Esophagus squamous epithelium (tissue), 5 donors: ENCODE measurements at regions of chr6 and their contacts with region 1.

Region 1: DNA sequence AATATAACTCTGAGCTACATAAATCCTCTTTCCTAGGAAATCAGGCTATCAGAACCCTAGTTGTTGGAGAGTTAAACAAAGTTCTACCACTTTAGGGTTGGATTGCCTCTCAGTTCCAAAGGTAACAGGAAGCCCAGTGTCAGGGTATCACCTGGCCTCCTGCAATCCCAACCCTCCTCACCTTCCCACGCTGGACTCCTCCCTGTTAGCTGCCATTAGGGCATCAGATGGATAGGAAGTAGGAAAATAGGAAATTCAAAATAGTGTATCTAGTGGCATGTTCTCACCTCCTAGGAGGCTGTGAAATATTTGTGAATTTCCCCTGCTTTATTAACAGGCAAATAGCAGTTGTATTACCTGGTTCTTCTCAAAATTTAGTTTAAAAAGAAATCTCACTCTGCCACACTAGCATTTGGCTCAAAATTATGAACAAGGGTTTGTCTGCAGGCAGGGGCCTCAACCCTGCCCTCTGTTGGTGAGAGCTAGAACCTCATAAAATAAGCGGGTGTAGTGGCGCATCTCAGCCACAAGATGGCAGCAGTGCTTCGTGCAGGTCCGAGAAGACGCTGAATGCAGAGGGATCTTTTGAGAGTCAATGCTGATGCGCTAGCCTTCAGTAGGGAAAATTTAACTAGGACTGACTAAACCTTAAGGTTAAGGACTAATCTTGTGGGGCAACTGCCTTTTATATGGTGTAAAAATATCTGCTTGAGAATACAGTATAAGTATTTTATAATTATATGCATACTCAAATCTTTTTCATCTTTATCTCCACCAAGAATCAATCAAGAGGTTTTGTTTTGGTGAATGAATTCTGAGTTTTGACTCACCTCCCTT is 209.8 kb upstream of the KCNQ5 start:
- DNase-seq: no peak
- H3K4me3 ChIP-seq: no peak overlapping the region
- H3K27ac ChIP-seq: no peak overlapping the region
- H3K4me1 ChIP-seq: no peaks in the 10 kb centered on the region
- H3K27me3 ChIP-seq: peaks cover 0 to 45% (median 0%) of the 10 kb centered on the region in 4 donors
- CTCF ChIP-seq: peak; percentile 99 to 100 (median 100)
- POLR2A ChIP-seq: no peak

Region 2: GRCh38 chr6:72064399-72064975 is 347.6 kb before region 1 on chr6:
- intact Hi-C with region 1: no loop called
- DNase-seq: no peak
- H3K4me3 ChIP-seq: no peak overlapping the region
- H3K27ac ChIP-seq: no peak overlapping the region
- H3K4me1 ChIP-seq: no peaks in the 10 kb centered on the region
- H3K27me3 ChIP-seq: no peaks in the 10 kb centered on the region
- CTCF ChIP-seq: no peak
- POLR2A ChIP-seq: no peak

Region 3: DNA sequence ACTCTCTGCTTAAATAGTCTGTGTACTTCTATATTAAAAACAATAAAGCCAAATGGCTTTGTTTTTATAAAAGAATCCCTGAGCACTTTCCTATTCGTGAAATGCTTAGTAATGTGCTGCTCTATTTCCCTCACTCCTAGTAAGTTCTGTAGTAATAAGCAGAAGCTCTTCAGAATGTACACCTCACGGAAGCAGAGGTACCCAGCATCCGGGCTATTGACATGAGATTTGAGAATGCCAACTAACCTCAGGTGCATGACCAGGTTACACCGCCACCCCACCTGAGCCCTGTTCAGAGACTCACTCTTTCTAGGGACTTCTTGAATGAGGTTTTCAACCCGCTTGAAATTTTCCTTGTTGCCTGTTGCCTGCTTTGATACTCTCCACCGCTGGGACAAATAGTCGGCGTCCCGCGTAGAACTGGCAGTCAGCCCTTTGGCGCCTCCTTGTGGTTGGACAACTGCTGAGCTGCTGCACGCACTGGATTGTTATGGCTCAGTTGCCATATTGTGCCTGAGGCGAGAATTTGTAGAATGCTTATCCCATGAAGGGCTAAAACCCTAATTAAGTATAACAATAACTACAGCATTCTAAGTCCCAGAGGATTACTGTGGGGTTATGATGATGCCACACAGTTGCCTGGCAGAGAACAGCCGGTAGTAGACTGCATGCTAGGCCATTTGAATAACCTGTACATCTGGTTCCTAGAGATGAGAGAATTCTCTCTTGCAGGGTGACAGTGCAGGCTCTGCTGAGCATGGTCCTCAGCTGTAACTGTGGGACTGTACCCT is 717.8 kb after region 1 on chr6:
- intact Hi-C with region 1: loop called (anchors 10 kb)
- DNase-seq: peak; percentile 12
- H3K4me3 ChIP-seq: no peak overlapping the region
- H3K27ac ChIP-seq: no peak overlapping the region
- H3K4me1 ChIP-seq: peaks cover 0 to 12% (median 0%) of the 10 kb centered on the region in 3 donors
- H3K27me3 ChIP-seq: peaks cover 0 to 84% (median 0%) of the 10 kb centered on the region in 4 donors
- CTCF ChIP-seq: peak; percentile 85 to 99 (median 90)
- POLR2A ChIP-seq: no peak

Region 4: GRCh38 chr6:73180763-73181619 is 768.9 kb after region 1 on chr6:
- intact Hi-C with region 1: loop called (anchors 5 kb)
- DNase-seq: no peak
- H3K4me3 ChIP-seq: peak overlapping the region in 2 of 4 donors; percentile 16 to 52
- H3K27ac ChIP-seq: no peak overlapping the region
- H3K4me1 ChIP-seq: peaks cover 0 to 6% (median 0%) of the 10 kb centered on the region in 3 donors
- H3K27me3 ChIP-seq: peaks cover 0 to 21% (median 0%) of the 10 kb centered on the region in 4 donors
- CTCF ChIP-seq: peak; percentile 70 to 88 (median 76)
- POLR2A ChIP-seq: no peak